GM12878 (cell line): ENCODE measurements at regions of chr4 and their contacts with region 1.

Region 1: GRCh38 chr4:139030614-139031235 is 15.1 kb downstream of the NOCT start:
- DNase-seq: peak; percentile 61
- ATAC-seq: peak; percentile 85
- H3K4me3 ChIP-seq: no peak overlapping the region
- H3K27ac ChIP-seq: no peak overlapping the region
- H3K4me1 ChIP-seq: peaks cover 3% of the 10 kb centered on the region; the same call in 1 of the 2 replicates
- H3K27me3 ChIP-seq: no peaks in the 10 kb centered on the region
- CTCF ChIP-seq: peak; percentile 81 to 94 (median 84); a peak in 5 of 6 replicates
- EP300 ChIP-seq: no peak
- POLR2A ChIP-seq: no peak
- RAD21 ChIP-seq: peak; percentile 85

Region 2: DNA sequence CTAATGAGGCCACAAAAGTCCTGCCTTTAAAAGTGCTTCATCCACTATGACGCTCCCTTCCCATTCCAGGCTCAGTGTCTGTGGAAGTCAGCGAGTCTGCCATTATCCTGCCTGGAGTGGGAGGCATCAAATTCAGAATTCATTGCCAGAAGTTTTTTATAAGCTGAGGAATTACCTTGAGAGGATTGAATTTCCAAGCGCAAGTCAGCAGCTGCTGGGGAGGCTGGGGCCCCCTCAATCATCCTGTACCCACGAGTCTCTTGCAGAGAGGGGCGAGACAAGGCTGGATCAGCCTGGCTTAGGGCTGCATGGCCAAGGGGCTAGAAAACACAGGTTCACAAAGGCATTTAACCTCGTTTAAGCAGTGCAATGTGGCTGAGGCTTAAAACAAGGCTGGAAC is 185.7 kb before region 1 on chr4:
- CTCF ChIA-PET with region 1: no interaction called
- POLR2A ChIA-PET with region 1: no interaction called
- RAD21 ChIA-PET with region 1: no interaction called
- SMC1A ChIA-PET with region 1: no interaction called
- in situ Hi-C with region 1: no loop called
- intact Hi-C with region 1: no loop called
- DNase-seq: no peak
- ATAC-seq: no peak
- H3K4me3 ChIP-seq: no peak overlapping the region
- H3K27ac ChIP-seq: no peak overlapping the region
- H3K4me1 ChIP-seq: no peaks in the 10 kb centered on the region
- H3K27me3 ChIP-seq: peaks cover 0 to 3% of the 10 kb centered on the region in 2 experiments; a peak in 3 of 4 replicates
- CTCF ChIP-seq: no peak
- EP300 ChIP-seq: no peak
- POLR2A ChIP-seq: no peak
- RAD21 ChIP-seq: no peak

Region 3: DNA sequence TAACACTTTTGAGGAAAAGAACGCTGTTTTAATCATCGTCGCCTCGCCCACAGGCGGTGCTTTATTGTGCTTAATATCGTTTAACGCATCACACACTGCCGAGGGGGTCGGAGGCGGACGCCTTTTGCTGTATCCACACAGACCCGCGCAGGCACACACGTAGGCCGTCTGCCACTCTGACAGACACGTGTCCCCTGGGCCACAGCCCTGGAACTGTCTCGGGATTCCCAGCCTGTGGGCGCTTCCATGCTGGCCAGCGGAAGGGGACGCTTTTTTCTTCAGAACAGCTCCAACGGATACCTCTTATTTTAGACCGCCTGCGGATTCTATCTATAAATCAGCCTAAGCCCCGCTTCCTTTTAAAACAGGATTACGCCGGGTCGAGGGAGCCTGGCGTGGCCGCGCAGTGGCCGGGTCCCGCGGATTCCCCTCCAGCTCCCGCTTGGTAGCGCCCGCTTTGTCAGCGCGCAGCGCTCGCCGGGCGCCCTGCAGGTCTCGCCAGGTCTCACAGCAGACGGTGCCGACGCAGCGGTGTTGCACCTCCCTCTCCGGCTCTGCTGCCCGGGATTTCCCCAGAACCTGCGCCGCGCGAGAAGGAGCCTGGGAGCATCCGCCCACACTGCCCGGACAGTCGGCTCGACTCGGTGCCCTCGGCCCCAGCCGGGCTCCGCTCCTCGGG is 15.3 kb before region 1 on chr4 and contains the start of gene NOCT:
- CTCF ChIA-PET with region 1: interaction called, 147 read pairs
- POLR2A ChIA-PET with region 1: interaction called, 7 read pairs
- RAD21 ChIA-PET with region 1: interaction called, 54 read pairs
- SMC1A ChIA-PET with region 1: interaction called, 92 read pairs
- in situ Hi-C with region 1: no loop called
- intact Hi-C with region 1: no loop called
- DNase-seq: peak; percentile 68
- ATAC-seq: peak; percentile 96
- H3K4me3 ChIP-seq: peak within 1 kb of the TSS; percentile 86
- H3K27ac ChIP-seq: peak within 1 kb of the TSS; percentile 93
- H3K4me1 ChIP-seq: peaks cover 7% of the 10 kb centered on the region; the same call in 1 of the 2 replicates
- H3K27me3 ChIP-seq: no peaks in the 10 kb centered on the region
- CTCF ChIP-seq: 0 out of 6 replicates have a peak, but pooled peaks of 1 of the 3 experiments have one; percentile 4
- EP300 ChIP-seq: no peak
- POLR2A ChIP-seq: peak; percentile 98
- RAD21 ChIP-seq: no peak
- polyA plus RNA-seq, gene NOCT: 1.4 to 1.6 TPM

Region 4: GRCh38 chr4:139054791-139055376 is 24.2 kb after region 1 on chr4:
- CTCF ChIA-PET with region 1: interaction called, 38 read pairs
- POLR2A ChIA-PET with region 1: no interaction called
- RAD21 ChIA-PET with region 1: interaction called, 12 read pairs
- SMC1A ChIA-PET with region 1: interaction called, 7 read pairs
- in situ Hi-C with region 1: no loop called
- intact Hi-C with region 1: no loop called
- DNase-seq: no peak
- ATAC-seq: no peak
- H3K4me3 ChIP-seq: no peak overlapping the region
- H3K27ac ChIP-seq: no peak overlapping the region
- H3K4me1 ChIP-seq: no peaks in the 10 kb centered on the region
- H3K27me3 ChIP-seq: no peaks in the 10 kb centered on the region
- CTCF ChIP-seq: no peak
- EP300 ChIP-seq: no peak
- POLR2A ChIP-seq: no peak
- RAD21 ChIP-seq: no peak

Region 5: DNA sequence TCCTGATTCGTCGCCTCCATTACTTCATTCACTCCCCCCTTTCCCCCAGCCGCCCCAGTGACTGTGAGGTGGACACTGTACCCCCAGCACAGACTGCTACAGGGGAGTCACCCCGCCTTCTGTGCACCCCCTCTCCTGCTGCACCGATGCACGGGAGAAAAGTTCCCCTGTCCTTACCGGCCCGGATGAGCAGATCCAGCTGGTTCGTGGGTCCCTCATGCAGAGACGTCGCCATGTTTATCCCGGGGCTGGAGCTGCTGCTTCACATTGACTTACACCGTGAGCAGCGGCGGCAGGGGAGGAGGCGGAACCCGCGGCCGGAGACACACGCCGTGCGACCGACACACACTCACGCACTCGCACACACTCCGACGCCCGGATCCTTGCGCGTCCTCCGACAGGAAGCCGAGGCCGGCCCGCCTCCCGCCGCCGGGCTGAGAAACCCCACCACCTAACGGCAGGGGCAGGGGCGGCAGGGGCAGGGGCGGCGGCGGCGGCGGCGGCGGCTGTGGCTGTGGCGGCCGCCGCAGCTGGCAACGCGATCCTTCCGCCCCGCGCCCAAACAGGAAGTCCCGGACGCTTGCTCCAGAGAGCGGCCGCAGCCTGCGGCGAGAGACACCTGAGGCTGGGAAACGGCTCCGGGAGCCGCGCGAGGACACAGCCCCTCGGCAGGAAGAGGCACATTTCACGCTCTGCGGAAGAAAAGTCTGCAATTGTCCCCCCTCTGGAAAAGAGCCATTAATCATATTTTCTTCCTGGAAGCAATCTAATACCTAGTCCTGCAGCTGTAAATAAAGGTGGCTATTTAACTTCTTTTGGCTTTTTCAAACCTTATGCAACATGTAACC is 53.5 kb after region 1 on chr4:
- CTCF ChIA-PET with region 1: interaction called, 51 read pairs
- POLR2A ChIA-PET with region 1: interaction called, 7 read pairs
- RAD21 ChIA-PET with region 1: interaction called, 15 read pairs
- SMC1A ChIA-PET with region 1: interaction called, 20 read pairs
- in situ Hi-C with region 1: no loop called
- intact Hi-C with region 1: no loop called
- DNase-seq: peak; percentile 62
- ATAC-seq: peak; percentile 77
- H3K4me3 ChIP-seq: peak overlapping the region; percentile 77
- H3K27ac ChIP-seq: peak overlapping the region; percentile 97
- H3K4me1 ChIP-seq: no peaks in the 10 kb centered on the region
- H3K27me3 ChIP-seq: no peaks in the 10 kb centered on the region
- CTCF ChIP-seq: 0 out of 6 replicates have a peak, but pooled peaks of 2 of the 3 experiments have one; percentile 2 to 32
- EP300 ChIP-seq: no peak
- POLR2A ChIP-seq: peak; percentile 87
- RAD21 ChIP-seq: no peak

Region 6: GRCh38 chr4:139167774-139168444 is 137.2 kb after region 1 on chr4:
- CTCF ChIA-PET with region 1: interaction called, 14 read pairs
- POLR2A ChIA-PET with region 1: no interaction called
- RAD21 ChIA-PET with region 1: interaction called, 9 read pairs
- SMC1A ChIA-PET with region 1: interaction called, 13 read pairs
- in situ Hi-C with region 1: no loop called
- intact Hi-C with region 1: no loop called
- DNase-seq: no peak
- ATAC-seq: peak; percentile 69
- H3K4me3 ChIP-seq: no peak overlapping the region
- H3K27ac ChIP-seq: no peak overlapping the region
- H3K4me1 ChIP-seq: no peaks in the 10 kb centered on the region
- H3K27me3 ChIP-seq: no peaks in the 10 kb centered on the region
- CTCF ChIP-seq: peak; percentile 31 to 42 (median 39); a peak in 4 of 6 replicates
- EP300 ChIP-seq: no peak
- POLR2A ChIP-seq: no peak
- RAD21 ChIP-seq: peak; percentile 64

Region 7: DNA sequence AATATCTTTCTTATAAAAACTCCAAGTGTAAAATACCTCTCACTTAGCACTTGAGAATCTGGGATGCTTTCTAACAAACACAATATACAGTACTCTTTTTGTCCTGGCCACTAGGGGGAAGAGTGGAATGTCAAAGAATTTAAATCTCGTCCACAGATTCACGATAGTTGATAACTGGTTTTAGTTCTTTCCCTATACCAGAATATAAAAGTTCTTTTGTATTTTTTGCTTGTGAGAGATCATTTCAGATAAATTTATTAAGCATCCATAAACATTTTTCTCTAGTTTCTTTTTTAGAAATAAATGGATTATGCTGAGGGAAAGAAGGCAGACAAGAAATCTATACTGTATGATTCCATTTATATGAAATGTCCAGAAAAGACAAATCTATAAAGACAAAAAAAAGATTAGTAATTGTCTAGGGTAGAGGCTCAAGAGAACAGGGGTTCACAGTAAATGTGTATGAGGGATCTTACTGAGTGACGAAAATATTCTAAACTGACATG is 198.9 kb after region 1 on chr4:
- CTCF ChIA-PET with region 1: interaction called, 31 read pairs
- POLR2A ChIA-PET with region 1: no interaction called
- RAD21 ChIA-PET with region 1: interaction called, 21 read pairs
- SMC1A ChIA-PET with region 1: interaction called, 23 read pairs
- in situ Hi-C with region 1: no loop called
- intact Hi-C with region 1: loop called (anchors 2 kb)
- DNase-seq: no peak
- ATAC-seq: peak; percentile 86
- H3K4me3 ChIP-seq: no peak overlapping the region
- H3K27ac ChIP-seq: no peak overlapping the region
- H3K4me1 ChIP-seq: no peaks in the 10 kb centered on the region
- H3K27me3 ChIP-seq: no peaks in the 10 kb centered on the region
- CTCF ChIP-seq: peak; percentile 61 to 74 (median 64)
- EP300 ChIP-seq: no peak
- POLR2A ChIP-seq: no peak
- RAD21 ChIP-seq: peak; percentile 84